Breast epithelium (tissue), 4 donors: ENCODE measurements at regions of chr10 and their contacts with region 1.

Region 1: GRCh38 chr10:133357285-133358151 is at the start of gene FUOM:
- DNase-seq: no peak
- H3K4me3 ChIP-seq: peak within 1 kb of the TSS; percentile 67 to 76 (median 72)
- H3K27ac ChIP-seq: peak within 1 kb of the TSS; percentile 57 to 79
- H3K4me1 ChIP-seq: peaks cover 0 to 4% of the 10 kb centered on the region in 2 donors
- H3K27me3 ChIP-seq: no peaks in the 10 kb centered on the region
- CTCF ChIP-seq: no peak
- POLR2A ChIP-seq: no peak
- total RNA-seq, gene FUOM: 13.8 to 31.5 (median 31.2) TPM

Region 2: GRCh38 chr10:133378251-133379096 is 21.0 kb after region 1 on chr10:
- intact Hi-C with region 1: loop called (anchors 2 kb)
- DNase-seq: no peak
- H3K4me3 ChIP-seq: peak overlapping the region; percentile 76 to 90 (median 81)
- H3K27ac ChIP-seq: peak overlapping the region; percentile 54 to 85
- H3K4me1 ChIP-seq: no peaks in the 10 kb centered on the region
- H3K27me3 ChIP-seq: no peaks in the 10 kb centered on the region
- CTCF ChIP-seq: no peak
- POLR2A ChIP-seq: no peak